RWPE1 (cell line): ENCODE measurements at regions of chr1 and their contacts with region 1.

Region 1: DNA sequence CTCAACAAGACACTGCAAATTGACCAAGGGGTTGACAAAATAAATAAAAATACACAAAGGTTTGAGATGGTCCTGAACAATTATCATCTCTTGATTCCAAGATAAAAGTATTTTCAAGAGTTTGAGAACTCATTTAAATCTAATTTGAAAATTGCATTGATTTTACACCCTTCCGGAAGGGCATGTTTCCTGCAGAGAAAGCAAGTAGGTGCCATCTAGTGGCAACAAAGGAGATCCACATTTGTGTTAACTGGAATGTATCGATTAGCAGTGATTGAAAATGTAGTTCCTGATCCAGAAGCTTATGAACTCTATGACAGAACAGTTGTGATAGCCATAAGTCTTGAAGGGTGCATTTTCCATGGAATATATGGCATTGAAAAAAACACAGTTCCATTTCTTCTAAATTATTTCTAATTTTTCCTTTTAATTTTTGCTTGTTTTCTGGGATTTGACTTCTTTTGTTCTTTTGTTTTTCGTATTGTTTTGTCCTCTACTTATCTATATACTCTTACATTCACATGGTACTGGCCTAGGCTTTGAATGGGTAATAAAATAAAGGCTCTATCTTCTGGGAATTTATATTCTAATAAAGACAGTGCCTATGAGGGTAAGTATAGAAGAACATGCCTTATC is 143.7 kb downstream of the DNM3 start:
- DNase-seq: peak; percentile 44
- H3K27ac ChIP-seq: no peak overlapping the region
- CTCF ChIP-seq: peak; percentile 82

Region 2: GRCh38 chr1:171781176-171781875 is 203.6 kb before region 1 on chr1 and contains the start of gene METTL13:
- CTCF ChIA-PET with region 1: no interaction called
- POLR2A ChIA-PET with region 1: no interaction called
- DNase-seq: peak; percentile 98
- H3K27ac ChIP-seq: peak within 1 kb of the TSS; percentile 89
- CTCF ChIP-seq: no peak

Region 3: GRCh38 chr1:171801487-171801891 is 183.5 kb before region 1 on chr1:
- CTCF ChIA-PET with region 1: interaction called, 68 read pairs
- POLR2A ChIA-PET with region 1: no interaction called
- DNase-seq: peak; percentile 54
- H3K27ac ChIP-seq: no peak overlapping the region
- CTCF ChIP-seq: peak; percentile 77

Region 4: GRCh38 chr1:171965777-171966176 is 19.2 kb before region 1 on chr1:
- CTCF ChIA-PET with region 1: interaction called, 12 read pairs
- POLR2A ChIA-PET with region 1: no interaction called
- DNase-seq: no peak
- H3K27ac ChIP-seq: no peak overlapping the region
- CTCF ChIP-seq: no peak